ENCODE measurements at regions of chr13 and their contacts with region 1.

Region 1: GRCh38 chr13:77329133-77329910 is 2.4 kb upstream of the MYCBP2 start:
- DNase-seq: peak; percentile 78 to 86
- ATAC-seq: peak; percentile 62 to 71
- H3K4me3 ChIP-seq: peak overlapping the region; percentile 88 to 100 (median 91)
- H3K27ac ChIP-seq: peak overlapping the region; percentile 86 to 95 (median 93)
- H3K4me1 ChIP-seq: peaks cover 24 to 29% of the 10 kb centered on the region in 2 donors
- H3K27me3 ChIP-seq: no peaks in the 10 kb centered on the region
- CTCF ChIP-seq: peak in 1 of 5 experiments; percentile 2
- POLR2A ChIP-seq: peak; percentile 44 to 73

Region 2: GRCh38 chr13:76383676-76384461 is 945.5 kb before region 1 on chr13:
- in situ Hi-C with region 1: no loop called
- intact Hi-C with region 1: no loop called
- DNase-seq: peak in 1 of 2 donors; percentile 13
- ATAC-seq: peak; percentile 60 to 73
- H3K4me3 ChIP-seq: no peak overlapping the region
- H3K27ac ChIP-seq: peak overlapping the region in 3 of 4 donors; percentile 29 to 38 (median 31)
- H3K4me1 ChIP-seq: no peaks in the 10 kb centered on the region
- H3K27me3 ChIP-seq: no peaks in the 10 kb centered on the region
- CTCF ChIP-seq: no peak
- POLR2A ChIP-seq: no peak

Region 3: DNA sequence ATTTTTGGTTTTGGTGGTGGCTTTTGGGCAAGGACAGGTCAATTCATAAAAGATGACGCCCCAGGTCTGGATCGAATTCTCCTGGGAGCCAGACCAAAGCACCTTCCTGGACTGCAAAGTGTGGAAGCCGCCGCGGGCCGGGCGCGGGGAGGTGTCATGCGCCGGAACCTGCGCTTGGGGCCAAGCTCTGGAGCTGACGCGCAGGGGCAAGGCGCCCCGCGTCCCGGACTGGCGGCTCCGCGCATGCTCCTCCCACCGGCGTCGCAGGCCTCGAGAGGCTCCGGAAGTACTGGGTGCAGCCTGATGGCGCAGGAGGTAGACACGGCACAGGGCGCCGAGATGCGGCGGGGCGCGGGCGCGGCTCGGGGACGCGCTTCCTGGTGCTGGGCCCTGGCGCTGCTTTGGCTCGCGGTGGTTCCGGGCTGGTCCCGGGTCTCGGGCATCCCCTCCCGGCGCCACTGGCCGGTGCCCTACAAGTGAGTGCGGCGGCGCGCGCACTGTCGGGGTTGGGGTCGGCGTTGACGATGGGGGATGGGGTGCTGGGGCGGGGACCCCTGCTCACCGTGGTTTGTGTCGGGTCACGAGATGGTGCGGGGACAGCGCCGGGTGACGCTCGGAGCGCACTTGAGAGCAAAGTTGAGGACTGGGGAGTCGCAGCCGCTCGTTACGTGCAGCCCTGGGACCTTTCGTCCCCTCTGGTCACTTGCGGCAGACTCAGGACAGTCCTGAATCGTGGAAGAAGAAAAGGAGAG is 337.4 kb before region 1 on chr13 and contains the start of gene CLN5:
- in situ Hi-C with region 1: no loop called
- intact Hi-C with region 1: loop called (anchors 5 kb)
- DNase-seq: peak; percentile 92 to 95
- ATAC-seq: peak; percentile 90 to 92
- H3K4me3 ChIP-seq: peak within 1 kb of the TSS; percentile 72 to 92 (median 86)
- H3K27ac ChIP-seq: peak within 1 kb of the TSS; percentile 89 to 95 (median 92)
- H3K4me1 ChIP-seq: peaks cover 14 to 15% of the 10 kb centered on the region in 2 donors
- H3K27me3 ChIP-seq: no peaks in the 10 kb centered on the region
- CTCF ChIP-seq: peak in 2 of 5 experiments; percentile 11 to 23
- POLR2A ChIP-seq: peak; percentile 89
- total RNA-seq, gene CLN5: 4.5 to 10.1 (median 7.1) TPM

Region 4: DNA sequence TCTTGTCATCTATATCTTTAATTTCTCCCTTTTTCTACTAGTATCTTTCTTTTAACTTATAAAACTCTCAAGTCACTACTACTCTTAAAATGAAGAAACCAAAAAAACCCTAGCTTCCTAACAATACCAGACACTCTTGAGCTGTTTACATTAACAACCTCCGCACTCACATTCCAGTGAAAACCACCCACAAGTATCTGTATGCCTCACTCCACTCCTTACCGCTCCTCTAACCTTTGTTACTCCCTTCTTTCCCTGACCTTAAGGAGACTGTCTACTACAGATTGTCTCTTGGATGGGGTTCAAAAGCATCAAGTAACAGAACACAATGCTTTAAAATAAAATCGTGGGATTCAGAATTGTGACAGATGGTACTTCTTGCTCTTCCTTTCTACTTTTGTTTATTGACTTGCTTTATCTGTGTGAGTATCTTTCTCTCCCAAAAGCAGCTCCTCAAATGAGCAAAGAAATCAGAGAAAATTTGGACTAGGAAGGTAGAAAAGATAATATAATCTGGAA is 192.4 kb before region 1 on chr13:
- in situ Hi-C with region 1: no loop called
- intact Hi-C with region 1: no loop called
- DNase-seq: no peak
- ATAC-seq: no peak
- H3K4me3 ChIP-seq: no peak overlapping the region
- H3K27ac ChIP-seq: no peak overlapping the region
- H3K4me1 ChIP-seq: peaks cover 0 to 4% of the 10 kb centered on the region in 2 donors
- H3K27me3 ChIP-seq: no peaks in the 10 kb centered on the region
- CTCF ChIP-seq: no peak
- POLR2A ChIP-seq: no peak

Region 5: DNA sequence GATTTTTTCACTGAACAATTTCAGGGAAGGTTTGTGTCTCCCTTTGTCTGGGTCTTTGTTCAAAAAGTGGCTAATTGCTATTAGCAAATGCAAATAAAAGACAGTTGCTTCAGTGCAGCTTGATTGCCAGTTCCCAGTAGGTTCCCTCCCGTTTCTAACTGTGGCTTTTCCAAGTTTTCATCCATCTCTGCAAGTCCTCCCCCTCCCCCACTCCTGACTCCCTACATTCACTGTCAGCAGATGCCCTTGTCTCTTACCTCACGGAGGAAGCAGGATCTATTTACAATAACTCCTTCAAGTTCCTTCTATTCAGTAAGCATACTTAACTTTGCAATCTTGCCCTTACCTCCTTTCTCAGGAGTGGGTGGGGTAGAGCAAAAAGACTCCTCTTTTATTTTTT is 150.7 kb after region 1 on chr13:
- in situ Hi-C with region 1: loop called in 1 of 4 experiments (anchors 25 kb)
- intact Hi-C with region 1: loop called (anchors 1 kb)
- DNase-seq: no peak
- ATAC-seq: no peak
- H3K4me3 ChIP-seq: no peak overlapping the region
- H3K27ac ChIP-seq: no peak overlapping the region
- H3K4me1 ChIP-seq: peaks cover 8 to 14% of the 10 kb centered on the region in 2 donors
- H3K27me3 ChIP-seq: no peaks in the 10 kb centered on the region
- CTCF ChIP-seq: no peak
- POLR2A ChIP-seq: no peak

Region 6: GRCh38 chr13:77637588-77637987 is 308.3 kb after region 1 on chr13:
- in situ Hi-C with region 1: no loop called
- intact Hi-C with region 1: no loop called
- DNase-seq: no peak
- ATAC-seq: no peak
- H3K4me3 ChIP-seq: no peak overlapping the region
- H3K27ac ChIP-seq: no peak overlapping the region
- H3K4me1 ChIP-seq: no peaks in the 10 kb centered on the region
- H3K27me3 ChIP-seq: peaks cover 0 to 2% (median 0%) of the 10 kb centered on the region in 3 donors
- CTCF ChIP-seq: no peak
- POLR2A ChIP-seq: no peak

Region 7: GRCh38 chr13:77697217-77698103 is 368.1 kb after region 1 on chr13 and contains the start of gene SLAIN1:
- in situ Hi-C with region 1: no loop called
- intact Hi-C with region 1: loop called (anchors 2 kb)
- DNase-seq: peak; percentile 40 to 62
- ATAC-seq: peak; percentile 83 to 85
- H3K4me3 ChIP-seq: peak within 1 kb of the TSS; percentile 64 to 88 (median 74)
- H3K27ac ChIP-seq: peak within 1 kb of the TSS; percentile 50 to 68 (median 60)
- H3K4me1 ChIP-seq: peaks cover 13 to 15% of the 10 kb centered on the region in 2 donors
- H3K27me3 ChIP-seq: no peaks in the 10 kb centered on the region
- CTCF ChIP-seq: no peak
- POLR2A ChIP-seq: peak; percentile 37 to 42
- total RNA-seq, gene SLAIN1: 3.2 to 17.5 (median 9.9) TPM